ENCODE measurements at regions of chr11 and their contacts with region 1.

Region 1: DNA sequence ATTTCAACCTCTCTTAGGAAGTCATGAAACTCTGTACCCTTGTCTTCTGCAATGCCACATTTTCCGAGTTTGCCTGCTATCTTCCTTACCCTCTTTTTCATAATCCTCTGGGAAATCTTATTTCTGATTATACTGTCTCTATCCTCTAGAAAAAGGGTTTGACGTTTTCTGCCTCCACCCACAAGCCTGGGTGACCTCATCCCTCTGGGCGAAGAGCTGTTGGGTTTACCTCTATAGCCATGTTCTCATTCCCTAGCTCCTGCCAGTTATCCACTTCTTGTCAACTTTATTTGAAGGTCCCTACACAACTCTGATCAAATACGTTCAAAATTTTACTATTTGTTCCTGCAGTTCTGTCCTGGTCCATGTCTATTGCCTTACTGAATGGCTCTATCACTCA is 1.8 kb upstream of the MS4A4A start:
- DNase-seq: no peak
- H3K4me3 ChIP-seq: no peak overlapping the region
- H3K27ac ChIP-seq: no peak overlapping the region
- H3K4me1 ChIP-seq: no peaks in the 10 kb centered on the region
- H3K27me3 ChIP-seq: no peaks in the 10 kb centered on the region
- CTCF ChIP-seq: no peak
- EP300 ChIP-seq: no peak
- POLR2A ChIP-seq: no peak

Region 2: DNA sequence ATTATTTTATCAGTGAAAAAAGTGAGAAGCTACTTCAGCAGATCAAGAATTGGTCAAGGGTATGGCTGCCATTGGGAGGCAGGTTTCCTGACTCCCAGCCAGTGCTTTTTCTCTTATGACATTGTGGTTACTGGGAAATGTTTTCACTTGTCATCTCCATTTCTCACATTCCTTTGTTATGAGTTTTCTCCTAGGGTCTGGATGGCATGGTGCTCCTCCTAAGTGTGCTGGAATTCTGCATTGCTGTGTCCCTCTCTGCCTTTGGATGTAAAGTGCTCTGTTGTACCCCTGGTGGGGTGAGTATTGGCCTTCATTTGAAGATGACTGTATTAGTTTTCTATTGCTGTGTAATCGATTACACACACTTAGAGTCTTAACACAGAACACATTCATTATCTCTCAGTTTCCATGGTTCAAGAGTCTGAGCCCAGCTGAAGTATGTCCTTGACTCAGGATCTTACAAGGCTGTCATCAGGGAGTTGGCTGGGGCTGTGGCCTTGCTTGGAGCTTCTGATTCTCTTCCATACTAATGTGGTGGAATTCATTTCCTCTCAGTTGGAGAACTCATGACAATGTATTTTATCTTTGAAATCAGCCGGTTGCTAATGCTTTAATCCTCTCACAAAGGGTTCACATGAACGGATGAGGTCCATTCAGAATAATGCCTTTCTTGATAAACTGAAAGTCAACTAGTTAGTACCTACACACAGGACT is 27.4 kb after region 1 on chr11:
- intact Hi-C with region 1: loop called (anchors 2 kb)
- DNase-seq: no peak
- H3K4me3 ChIP-seq: no peak overlapping the region
- H3K27ac ChIP-seq: no peak overlapping the region
- H3K4me1 ChIP-seq: no peaks in the 10 kb centered on the region
- H3K27me3 ChIP-seq: no peaks in the 10 kb centered on the region
- CTCF ChIP-seq: no peak
- EP300 ChIP-seq: no peak
- POLR2A ChIP-seq: no peak